ENCODE measurements at regions of chr17 and their contacts with region 1.

Region 1: GRCh38 chr17:69235338-69235930 is 6.8 kb upstream of the ABCA10 start:
- DNase-seq: peak; percentile 59 to 83
- ATAC-seq: peak; percentile 99
- H3K4me3 ChIP-seq: no peak overlapping the region
- H3K27ac ChIP-seq: no peak overlapping the region
- H3K4me1 ChIP-seq: no peaks in the 10 kb centered on the region
- CTCF ChIP-seq: peak; percentile 98
- EP300 ChIP-seq: no peak
- POLR2A ChIP-seq: no peak
- RAD21 ChIP-seq: peak; percentile 96 to 97

Region 2: DNA sequence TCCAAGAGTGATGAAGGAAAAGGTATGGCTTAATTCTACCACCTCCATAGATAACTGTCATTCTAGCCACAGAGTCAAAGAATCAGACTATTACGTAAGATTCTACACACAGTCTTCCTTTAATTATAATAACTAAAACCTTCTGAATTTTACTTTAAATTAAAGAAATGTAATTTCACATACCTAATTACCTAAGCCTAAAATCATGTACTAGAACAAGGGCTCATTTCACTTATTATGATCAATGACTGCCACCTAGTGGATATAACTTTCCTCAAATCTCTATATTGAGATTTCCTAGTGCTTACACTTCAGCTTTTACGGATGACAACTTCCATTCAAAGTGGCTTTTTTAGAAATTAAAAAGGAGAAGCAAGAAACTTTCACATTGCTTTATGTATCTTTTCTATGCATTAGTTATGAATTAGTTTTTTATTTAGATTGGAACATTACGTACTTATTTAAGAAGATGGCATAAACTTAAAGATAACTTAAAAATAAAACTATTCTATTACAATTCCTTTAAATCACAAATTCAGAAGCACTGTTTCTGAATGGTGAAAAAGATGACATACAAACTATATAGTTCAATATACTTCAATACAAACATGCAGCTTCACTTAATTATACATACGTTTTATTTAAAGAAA is 11.4 kb after region 1 on chr17:
- CTCF ChIA-PET with region 1: interaction called, 19 read pairs
- POLR2A ChIA-PET with region 1: no interaction called
- DNase-seq: peak; percentile 31 to 55
- ATAC-seq: peak; percentile 47 to 85; a peak in 4 of 6 replicates
- H3K4me3 ChIP-seq: no peak overlapping the region
- H3K27ac ChIP-seq: no peak overlapping the region
- H3K4me1 ChIP-seq: peaks cover 7% of the 10 kb centered on the region; the same call in 1 of the 3 replicates
- CTCF ChIP-seq: peak; percentile 92
- EP300 ChIP-seq: no peak
- POLR2A ChIP-seq: no peak
- RAD21 ChIP-seq: peak; percentile 82 to 86

Region 3: DNA sequence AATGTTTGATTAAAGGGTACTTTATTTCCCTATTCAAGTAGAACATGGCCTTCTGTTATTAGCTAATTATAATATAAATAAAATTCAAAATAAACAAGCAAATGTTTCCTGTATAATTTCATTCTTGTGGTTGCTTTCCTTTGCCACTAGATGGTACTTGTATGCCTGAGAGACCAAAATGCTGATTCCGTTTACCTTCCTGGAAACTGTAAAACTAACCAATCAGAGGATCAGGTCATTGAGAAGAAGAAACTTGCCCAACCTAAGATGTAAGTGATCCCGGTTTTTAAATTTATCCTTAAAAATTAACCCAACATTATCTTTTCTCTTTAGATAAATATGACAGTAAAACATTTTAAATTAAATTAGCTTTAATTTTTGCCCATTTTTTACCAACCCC is 99.6 kb after region 1 on chr17:
- CTCF ChIA-PET with region 1: no interaction called
- POLR2A ChIA-PET with region 1: no interaction called
- DNase-seq: peak; percentile 39 to 68
- ATAC-seq: peak in 1 of 2 experiments; percentile 53; a peak in 2 of 6 replicates
- H3K4me3 ChIP-seq: no peak overlapping the region
- H3K27ac ChIP-seq: no peak overlapping the region
- H3K4me1 ChIP-seq: no peaks in the 10 kb centered on the region
- CTCF ChIP-seq: peak; percentile 48
- EP300 ChIP-seq: no peak
- POLR2A ChIP-seq: no peak
- RAD21 ChIP-seq: peak; percentile 55 to 70

Region 4: GRCh38 chr17:69448431-69449102 is 213.1 kb after region 1 on chr17:
- CTCF ChIA-PET with region 1: no interaction called
- POLR2A ChIA-PET with region 1: no interaction called
- DNase-seq: no peak
- ATAC-seq: no peak
- H3K4me3 ChIP-seq: no peak overlapping the region
- H3K27ac ChIP-seq: 0 out of 6 replicates have a peak overlapping the region, but pooled peaks of 1 of the 2 experiments have one; percentile 9
- H3K4me1 ChIP-seq: peaks cover 7% of the 10 kb centered on the region; the same call in 2 of the 3 replicates
- CTCF ChIP-seq: no peak
- EP300 ChIP-seq: no peak
- POLR2A ChIP-seq: no peak
- RAD21 ChIP-seq: no peak

Region 5: DNA sequence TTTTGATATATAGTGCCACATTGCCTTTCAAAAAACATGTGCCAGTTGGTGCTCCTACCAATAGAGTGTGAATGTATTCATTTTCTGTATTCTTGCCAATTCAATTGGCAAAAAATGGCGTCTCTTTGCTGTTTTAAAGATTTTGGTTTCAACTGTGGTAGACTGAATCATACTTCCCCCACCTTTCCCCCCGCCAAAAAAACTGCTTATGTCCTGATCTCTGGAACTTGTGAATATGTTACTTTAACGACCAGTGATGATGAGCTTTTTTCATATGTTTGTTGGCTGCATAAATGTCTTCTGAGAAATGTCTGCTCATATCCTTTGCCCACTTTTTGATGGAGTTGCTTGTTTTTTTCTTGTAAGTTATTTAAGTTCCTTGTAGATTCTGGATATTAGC is 514.5 kb after region 1 on chr17:
- CTCF ChIA-PET with region 1: no interaction called
- POLR2A ChIA-PET with region 1: no interaction called
- DNase-seq: no peak
- ATAC-seq: no peak
- H3K4me3 ChIP-seq: no peak overlapping the region
- H3K27ac ChIP-seq: no peak overlapping the region
- H3K4me1 ChIP-seq: no peaks in the 10 kb centered on the region
- CTCF ChIP-seq: no peak
- EP300 ChIP-seq: no peak
- POLR2A ChIP-seq: no peak
- RAD21 ChIP-seq: no peak

Measured in A549 (cell line).